Breast epithelium (tissue), 4 donors: ENCODE measurements at regions of chr15 and their contacts with region 1.

Region 1: DNA sequence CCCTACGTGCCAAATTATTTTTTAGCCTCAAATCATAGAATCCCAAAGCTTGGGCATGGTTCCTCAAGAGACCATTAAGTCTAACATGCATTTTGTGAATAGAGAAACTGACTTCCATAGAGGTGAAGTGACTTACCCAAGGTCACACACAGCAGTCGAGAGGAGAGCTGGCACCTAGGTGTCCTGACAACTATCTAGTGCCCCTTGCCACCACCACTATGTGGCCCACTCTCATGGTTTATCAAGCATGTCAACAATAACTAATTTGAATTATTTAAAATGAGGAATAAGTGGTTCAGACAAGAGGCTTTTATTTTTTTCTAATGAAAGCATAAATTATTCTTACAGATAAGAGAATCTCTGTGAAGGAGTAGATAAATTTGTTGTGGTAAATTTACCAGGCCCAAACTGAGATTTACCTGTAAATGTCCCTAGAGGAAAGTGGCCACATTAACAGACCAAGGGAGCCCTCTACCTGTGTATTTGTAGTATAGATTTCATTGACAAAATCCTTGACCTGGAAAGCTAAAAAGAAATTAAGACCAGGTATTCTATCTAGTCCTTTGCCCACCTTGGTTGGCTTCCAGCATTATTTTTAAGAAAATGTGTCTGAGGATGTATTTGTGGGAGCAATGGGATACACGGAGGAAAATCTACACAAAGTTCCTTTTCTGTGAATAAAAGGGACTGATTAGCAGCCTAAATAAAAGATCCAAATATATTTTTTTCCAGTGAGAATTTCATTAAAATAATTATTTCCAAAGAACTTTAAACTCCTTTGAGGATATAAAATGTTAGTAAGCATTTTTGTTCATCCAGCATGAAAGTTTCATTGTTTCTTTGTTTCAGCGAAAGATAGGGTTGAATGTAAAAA is 49.1 kb downstream of the IQCH start:
- DNase-seq: no peak
- H3K4me3 ChIP-seq: no peak overlapping the region
- H3K27ac ChIP-seq: no peak overlapping the region
- H3K4me1 ChIP-seq: no peaks in the 10 kb centered on the region
- H3K27me3 ChIP-seq: no peaks in the 10 kb centered on the region
- CTCF ChIP-seq: peak; percentile 46 to 67 (median 55)
- POLR2A ChIP-seq: no peak

Region 2: DNA sequence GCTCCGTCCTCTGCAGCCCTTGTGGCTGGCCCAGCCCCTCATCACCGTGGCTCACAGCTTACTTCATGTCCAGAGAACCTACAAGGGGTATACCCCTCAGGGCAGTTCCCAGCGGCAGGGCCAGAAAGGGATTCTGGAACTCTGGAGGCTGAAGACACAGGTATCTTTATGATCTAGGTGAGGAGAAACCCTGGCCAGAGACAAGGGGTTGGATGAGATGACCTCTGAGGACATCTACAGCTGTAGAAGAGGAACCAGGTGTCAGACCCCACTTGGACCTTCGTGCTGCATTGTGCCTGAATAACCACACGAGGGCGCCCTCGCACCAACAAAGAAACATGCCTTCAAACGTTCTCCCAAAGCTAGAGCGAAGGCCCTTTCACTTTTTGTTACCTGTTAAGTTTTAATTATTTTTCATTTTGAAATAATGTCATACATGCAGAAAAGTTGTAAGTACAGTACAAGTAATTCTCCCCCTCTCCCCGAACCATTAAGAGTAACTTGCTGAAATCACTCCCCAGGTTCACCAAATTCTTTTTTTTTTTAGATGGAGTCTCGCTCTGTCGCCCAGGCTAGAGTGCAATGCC is 357.1 kb before region 1 on chr15:
- intact Hi-C with region 1: loop called (anchors 10 kb)
- DNase-seq: peak; percentile 57 to 73
- H3K4me3 ChIP-seq: no peak overlapping the region
- H3K27ac ChIP-seq: no peak overlapping the region
- H3K4me1 ChIP-seq: no peaks in the 10 kb centered on the region
- H3K27me3 ChIP-seq: no peaks in the 10 kb centered on the region
- CTCF ChIP-seq: peak; percentile 81 to 92 (median 87)
- POLR2A ChIP-seq: no peak

Region 3: DNA sequence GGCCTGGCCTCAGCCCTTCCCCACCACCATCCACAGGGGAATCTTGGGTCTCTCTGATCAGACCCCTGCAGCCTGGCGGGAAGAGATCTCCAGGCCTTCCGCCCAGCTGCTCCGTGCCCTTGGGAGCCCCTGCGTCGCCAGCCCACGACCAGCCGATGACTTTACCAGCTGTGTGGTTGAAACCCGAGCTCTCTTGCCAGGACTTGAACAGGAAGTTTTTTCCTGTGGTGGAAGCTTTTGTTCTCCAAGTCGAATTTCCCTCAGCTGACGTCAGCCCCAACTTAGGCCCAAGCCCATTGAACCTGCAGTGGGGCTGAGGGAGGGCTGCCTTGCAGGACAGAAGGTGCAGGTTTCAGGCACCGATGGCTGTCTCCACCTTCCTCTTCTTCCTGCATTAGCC is 290.0 kb before region 1 on chr15:
- intact Hi-C with region 1: no loop called
- DNase-seq: no peak
- H3K4me3 ChIP-seq: no peak overlapping the region
- H3K27ac ChIP-seq: peak overlapping the region in 1 of 2 donors; percentile 41
- H3K4me1 ChIP-seq: no peaks in the 10 kb centered on the region
- H3K27me3 ChIP-seq: no peaks in the 10 kb centered on the region
- CTCF ChIP-seq: no peak
- POLR2A ChIP-seq: no peak

Region 4: DNA sequence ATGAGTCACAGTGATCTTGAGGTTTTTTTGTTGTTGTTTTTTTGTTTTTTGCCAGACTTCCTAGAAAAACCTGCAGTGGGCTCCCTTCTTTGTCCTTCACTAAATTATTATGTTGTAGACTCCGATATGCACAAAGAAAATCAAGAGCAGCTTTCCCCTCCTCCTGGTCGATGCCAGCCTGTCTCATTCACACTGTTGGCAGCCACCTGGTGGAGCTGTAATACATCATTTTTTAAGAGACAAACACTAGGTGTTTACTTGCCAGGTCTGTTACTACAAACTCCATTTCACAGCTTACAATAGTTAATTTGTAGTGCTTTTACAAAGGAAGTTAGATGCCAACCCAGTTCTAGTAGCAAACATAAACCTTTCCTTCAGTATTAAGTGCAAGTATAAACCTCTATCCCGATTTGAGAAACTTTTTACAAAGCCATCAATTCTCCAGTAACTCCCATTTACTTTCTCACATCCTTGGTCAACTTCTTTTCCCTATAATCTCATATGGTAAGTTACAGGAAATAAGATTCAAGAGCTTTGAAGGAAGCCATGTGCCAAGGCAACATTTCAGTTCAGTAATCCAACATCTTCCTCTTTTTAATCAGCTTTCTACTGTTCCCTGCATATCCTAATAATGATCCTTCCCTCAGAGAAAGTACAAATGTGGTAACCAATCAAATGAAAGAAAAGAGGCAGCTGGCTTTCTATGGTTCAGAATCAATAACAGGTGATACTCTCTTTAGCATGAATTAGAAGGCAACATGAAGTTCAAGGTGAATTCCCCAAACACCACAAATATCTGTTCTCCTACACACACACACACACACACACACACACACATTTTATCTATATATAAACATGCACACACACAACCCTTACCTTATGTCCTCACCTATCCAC is 63.2 kb before region 1 on chr15:
- intact Hi-C with region 1: no loop called
- DNase-seq: no peak
- H3K4me3 ChIP-seq: no peak overlapping the region
- H3K27ac ChIP-seq: no peak overlapping the region
- H3K4me1 ChIP-seq: no peaks in the 10 kb centered on the region
- H3K27me3 ChIP-seq: no peaks in the 10 kb centered on the region
- CTCF ChIP-seq: peak in 1 of 3 donors; percentile 28
- POLR2A ChIP-seq: no peak